GM10248 (cell line): ENCODE measurements at regions of chr4 and their contacts with region 1.

Region 1: GRCh38 chr4:18593445-18594002 is 572.0 kb upstream of the LCORL start:
- DNase-seq: peak; percentile 59
- CTCF ChIP-seq: peak; percentile 82

Region 2: GRCh38 chr4:18582841-18583240 is 10.7 kb before region 1 on chr4:
- CTCF ChIA-PET with region 1: interaction called, 10 read pairs
- POLR2A ChIA-PET with region 1: no interaction called
- DNase-seq: no peak
- CTCF ChIP-seq: no peak

Region 3: DNA sequence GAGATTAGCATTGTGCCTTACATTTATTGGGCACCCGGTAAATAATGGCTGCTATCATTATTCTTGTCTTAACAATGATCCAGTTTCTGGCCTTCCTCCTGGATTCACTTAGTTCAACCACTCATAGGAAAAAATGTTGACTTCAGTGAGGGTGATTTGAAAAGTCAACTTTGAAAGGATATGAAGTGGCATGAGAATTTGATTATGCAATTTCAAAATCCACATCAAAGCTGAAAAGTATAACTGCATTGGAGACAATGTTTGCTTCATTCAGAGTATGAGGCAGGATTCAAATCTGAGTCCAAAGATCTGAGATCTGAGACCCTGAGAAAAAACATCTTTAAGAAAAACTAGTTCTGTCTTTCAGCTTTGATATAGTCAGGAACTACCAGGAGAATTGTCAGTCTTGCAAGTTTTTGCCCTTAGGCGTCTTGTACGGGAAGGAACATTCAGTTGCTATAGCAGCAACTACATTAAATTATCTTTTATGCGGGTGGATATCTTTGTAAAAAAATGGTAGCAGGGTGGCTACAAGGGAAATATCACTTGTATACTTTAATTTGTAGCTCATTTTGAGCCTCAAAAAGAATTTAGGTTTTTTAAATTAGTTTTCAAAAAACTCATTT is 15.5 kb after region 1 on chr4:
- CTCF ChIA-PET with region 1: interaction called, 11 read pairs
- POLR2A ChIA-PET with region 1: no interaction called
- DNase-seq: no peak
- CTCF ChIP-seq: no peak